ENCODE measurements at regions of chrX and their contacts with region 1.

Region 1: GRCh38 chrX:41664307-41665299 is 24.2 kb upstream of the GPR34 start:
- DNase-seq: no peak
- H3K4me3 Mint-ChIP-seq: no peak overlapping the region
- H3K27ac Mint-ChIP-seq: peak overlapping the region; percentile 86
- H3K4me1 Mint-ChIP-seq: peaks cover 42% of the 10 kb centered on the region
- H3K27me3 Mint-ChIP-seq: no peaks in the 10 kb centered on the region

Region 2: GRCh38 chrX:41377624-41378023 is 287.0 kb before region 1 on chrX:
- intact Hi-C with region 1: no loop called
- DNase-seq: no peak
- H3K4me3 Mint-ChIP-seq: no peak overlapping the region
- H3K27ac Mint-ChIP-seq: peak overlapping the region; percentile 76
- H3K4me1 Mint-ChIP-seq: peaks cover 4% of the 10 kb centered on the region
- H3K27me3 Mint-ChIP-seq: no peaks in the 10 kb centered on the region

Region 3: DNA sequence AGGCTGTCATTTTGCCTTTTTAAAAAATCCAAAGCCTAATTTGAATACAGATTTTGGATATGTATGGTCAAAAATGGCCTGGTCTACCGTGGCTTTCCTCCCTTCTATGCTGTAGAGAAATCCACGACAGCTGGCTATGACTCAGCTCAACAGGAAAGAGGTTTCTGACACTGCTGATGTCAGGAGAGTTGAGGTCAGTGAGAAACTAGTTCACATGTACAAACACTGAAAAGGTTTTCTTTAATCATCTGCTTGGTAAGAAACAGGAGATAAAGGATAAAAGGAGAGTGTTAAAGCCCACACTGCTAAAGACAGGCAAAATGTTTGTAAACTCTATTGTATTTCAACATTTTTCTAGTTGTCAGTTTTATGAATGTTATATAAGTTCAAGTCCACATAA is 103.6 kb before region 1 on chrX:
- intact Hi-C with region 1: loop called (anchors 5 kb)
- DNase-seq: peak; percentile 19
- H3K4me3 Mint-ChIP-seq: no peak overlapping the region
- H3K27ac Mint-ChIP-seq: peak overlapping the region; percentile 65
- H3K4me1 Mint-ChIP-seq: peaks cover 38% of the 10 kb centered on the region
- H3K27me3 Mint-ChIP-seq: no peaks in the 10 kb centered on the region

Region 4: DNA sequence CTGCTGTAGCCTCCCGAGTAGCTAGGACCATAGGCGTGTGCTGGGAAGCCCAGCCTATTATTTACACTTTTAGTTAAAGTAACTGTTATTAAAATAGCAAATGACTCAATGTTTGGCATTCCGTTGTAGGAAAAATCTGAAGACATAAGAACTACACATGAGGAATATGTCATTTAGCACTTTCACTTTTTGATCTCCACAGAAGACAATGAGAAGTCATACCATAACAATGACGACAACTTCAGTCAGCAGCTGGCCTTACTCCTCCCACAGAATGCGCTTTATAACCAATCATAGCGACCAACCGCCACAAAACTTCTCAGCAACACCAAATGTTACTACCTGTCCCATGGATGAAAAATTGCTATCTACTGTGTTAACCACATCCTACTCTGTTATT is 30.8 kb after region 1 on chrX:
- intact Hi-C with region 1: loop called (anchors 2 kb)
- DNase-seq: no peak
- H3K4me3 Mint-ChIP-seq: no peak overlapping the region
- H3K27ac Mint-ChIP-seq: no peak overlapping the region
- H3K4me1 Mint-ChIP-seq: peaks cover 23% of the 10 kb centered on the region
- H3K27me3 Mint-ChIP-seq: no peaks in the 10 kb centered on the region

Region 5: GRCh38 chrX:41703574-41704029 is 39.0 kb after region 1 on chrX:
- intact Hi-C with region 1: loop called (anchors 2 kb)
- DNase-seq: no peak
- H3K4me3 Mint-ChIP-seq: no peak overlapping the region
- H3K27ac Mint-ChIP-seq: no peak overlapping the region
- H3K4me1 Mint-ChIP-seq: peaks cover 25% of the 10 kb centered on the region
- H3K27me3 Mint-ChIP-seq: no peaks in the 10 kb centered on the region

Region 6: GRCh38 chrX:41734530-41734929 is 69.9 kb after region 1 on chrX:
- intact Hi-C with region 1: loop called (anchors 1 kb)
- DNase-seq: no peak
- H3K4me3 Mint-ChIP-seq: peak overlapping the region; percentile 26
- H3K27ac Mint-ChIP-seq: peak overlapping the region; percentile 89
- H3K4me1 Mint-ChIP-seq: peaks cover 28% of the 10 kb centered on the region
- H3K27me3 Mint-ChIP-seq: no peaks in the 10 kb centered on the region

Region 7: DNA sequence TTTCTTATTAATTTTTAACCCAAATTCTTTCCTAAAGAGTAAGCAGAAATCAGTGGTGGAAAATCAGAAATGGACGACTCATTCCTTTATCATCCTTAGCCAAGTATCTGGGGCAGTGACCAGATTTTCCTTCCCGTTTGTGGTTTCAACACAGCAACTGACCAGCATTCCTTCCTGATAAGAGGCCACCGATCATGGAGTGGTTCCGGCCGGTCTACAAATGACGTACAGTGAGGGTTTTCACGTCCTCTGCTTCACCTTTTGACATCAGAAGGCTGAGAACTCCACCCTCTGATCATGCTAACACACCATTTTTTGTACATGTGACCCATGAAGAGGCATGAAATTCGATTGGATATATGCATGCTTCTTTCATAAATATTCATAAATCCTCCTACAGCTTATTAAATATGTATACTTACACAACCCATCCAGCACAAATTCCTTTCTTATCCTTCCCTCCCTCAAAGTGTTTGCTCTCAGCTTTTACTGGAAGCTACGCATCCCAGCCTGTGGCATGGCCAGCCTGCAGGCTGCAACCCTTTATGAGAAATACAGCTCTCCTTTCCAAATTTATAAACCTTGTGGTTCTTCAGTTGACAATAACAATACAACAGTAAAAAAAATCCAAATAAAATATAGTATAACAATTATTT is 431.8 kb after region 1 on chrX:
- intact Hi-C with region 1: loop called (anchors 5 kb)
- DNase-seq: no peak
- H3K4me3 Mint-ChIP-seq: no peak overlapping the region
- H3K27ac Mint-ChIP-seq: no peak overlapping the region
- H3K4me1 Mint-ChIP-seq: peaks cover 6% of the 10 kb centered on the region
- H3K27me3 Mint-ChIP-seq: no peaks in the 10 kb centered on the region